Activated naive CD4-positive, alpha-beta T cell treated with anti-CD3 and anti-CD28 coated beads for 36 hours (primary cell): ENCODE measurements at regions of chr3 and their contacts with region 1.

Region 1: DNA sequence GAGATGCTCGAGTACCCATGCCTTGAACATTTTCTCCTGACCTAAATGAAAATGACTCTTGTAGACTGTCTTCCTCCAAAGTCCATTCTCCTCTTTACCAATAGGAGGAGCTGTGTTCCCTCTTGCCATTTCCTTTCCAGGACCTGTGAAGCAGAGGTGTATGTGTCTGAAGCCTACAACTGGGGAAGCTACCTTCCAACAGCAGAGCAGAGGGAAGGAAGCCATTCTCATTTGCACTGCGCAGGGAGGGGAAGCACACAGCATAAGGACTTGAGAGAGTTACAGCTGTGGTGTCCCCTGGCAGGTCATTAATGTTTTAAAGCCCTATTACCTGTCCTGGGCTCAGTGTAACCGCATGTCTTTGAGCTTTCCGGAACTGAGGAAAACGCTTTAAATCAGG is 38.7 kb downstream of the HSPBAP1 start:
- DNase-seq: peak; percentile 26
- H3K4me3 Mint-ChIP-seq: no peak overlapping the region
- H3K27ac Mint-ChIP-seq: no peak overlapping the region
- H3K4me1 Mint-ChIP-seq: no peaks in the 10 kb centered on the region
- H3K27me3 Mint-ChIP-seq: no peaks in the 10 kb centered on the region

Region 2: GRCh38 chr3:122942937-122943827 is 188.3 kb after region 1 on chr3:
- CTCF ChIA-PET with region 1: interaction called, 3 read pairs
- intact Hi-C with region 1: loop called (anchors 5 kb)
- DNase-seq: peak; percentile 49
- H3K4me3 Mint-ChIP-seq: no peak overlapping the region
- H3K27ac Mint-ChIP-seq: no peak overlapping the region
- H3K4me1 Mint-ChIP-seq: no peaks in the 10 kb centered on the region
- H3K27me3 Mint-ChIP-seq: no peaks in the 10 kb centered on the region

Region 3: DNA sequence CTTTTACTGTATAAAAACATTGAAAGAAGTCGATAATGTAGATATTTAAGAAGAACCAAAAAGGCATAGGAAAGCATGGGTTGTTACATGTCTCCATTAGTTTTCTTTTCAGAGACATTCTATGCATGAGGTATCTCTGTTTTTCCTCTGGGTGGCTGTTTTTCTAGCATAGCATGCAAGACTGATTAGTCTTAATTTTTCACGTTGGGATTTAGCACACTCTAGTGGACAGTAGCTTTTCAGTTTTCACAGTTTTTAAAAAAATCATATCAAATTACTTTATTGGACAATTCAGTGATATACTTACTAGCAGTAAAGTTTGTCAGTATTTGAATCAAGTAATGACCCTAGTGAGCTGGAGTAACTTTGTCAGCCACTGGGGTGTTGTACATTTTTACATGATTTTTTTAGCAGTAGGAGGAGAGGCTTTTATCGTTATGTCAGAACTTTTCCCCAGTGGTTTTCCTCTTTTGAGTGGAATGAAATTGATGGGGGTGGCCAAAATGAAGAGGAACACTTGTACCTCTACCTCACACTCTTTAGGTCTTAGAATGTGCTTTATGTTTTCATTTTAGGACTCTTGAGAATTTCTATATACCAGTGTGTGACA is 504.0 kb after region 1 on chr3:
- CTCF ChIA-PET with region 1: interaction called, 5 read pairs
- intact Hi-C with region 1: loop called (anchors 10 kb)
- DNase-seq: no peak
- H3K4me3 Mint-ChIP-seq: no peak overlapping the region
- H3K27ac Mint-ChIP-seq: no peak overlapping the region
- H3K4me1 Mint-ChIP-seq: no peaks in the 10 kb centered on the region
- H3K27me3 Mint-ChIP-seq: no peaks in the 10 kb centered on the region